GM10248 (cell line): ENCODE measurements at regions of chr1 and their contacts with region 1.

Region 1: DNA sequence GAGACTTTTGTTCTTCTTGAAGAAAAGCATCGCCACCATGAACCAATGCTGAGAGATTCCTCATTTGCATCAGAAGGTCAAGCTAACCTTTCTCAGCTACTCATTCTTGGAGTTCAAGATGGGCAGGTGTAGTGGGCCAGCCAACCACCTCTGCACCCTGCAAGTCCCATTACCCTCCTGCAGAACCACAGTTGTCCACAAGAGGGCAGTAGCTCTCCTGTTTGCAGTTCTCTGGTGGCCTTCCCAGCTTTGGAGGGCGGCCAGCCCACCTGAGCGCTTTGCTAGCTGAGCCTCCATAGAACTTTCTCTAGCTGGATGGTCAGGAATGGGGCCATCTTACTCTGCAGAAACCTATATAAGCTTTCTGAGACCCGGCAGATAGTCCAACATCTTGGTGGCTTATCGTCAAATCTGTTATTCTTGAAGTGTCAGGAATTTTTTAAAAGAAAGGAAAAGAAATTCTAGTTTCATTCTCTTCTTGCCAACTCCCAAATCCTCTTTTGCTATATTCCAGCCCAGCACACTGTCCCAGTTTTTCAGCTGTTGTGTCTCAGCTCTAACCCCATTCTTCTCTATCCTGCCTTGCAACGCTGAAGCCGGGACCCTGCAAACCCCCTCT is 11.0 kb upstream of the LMX1A start:
- DNase-seq: peak; percentile 78
- CTCF ChIP-seq: peak; percentile 94

Region 2: DNA sequence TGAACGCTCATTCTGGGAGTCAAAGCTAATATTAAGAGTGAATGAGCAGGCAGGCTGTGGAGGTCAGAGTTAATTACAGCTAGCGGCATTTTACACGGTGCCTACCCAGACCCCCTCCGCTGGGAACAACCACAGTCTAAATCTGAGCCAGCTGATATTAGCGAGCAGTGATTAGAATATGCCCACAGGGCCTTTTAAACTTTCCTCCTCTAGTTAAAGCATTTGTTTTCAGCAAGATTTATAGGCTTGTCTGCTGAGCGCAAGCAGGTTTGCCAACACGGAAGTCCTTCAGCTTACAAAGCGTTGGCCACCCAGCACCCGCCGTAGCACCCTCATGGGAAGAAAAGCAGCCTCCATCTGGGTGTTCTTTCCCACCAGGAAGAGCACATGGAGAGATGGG is 83.0 kb before region 1 on chr1:
- CTCF ChIA-PET with region 1: interaction called, 10 read pairs
- POLR2A ChIA-PET with region 1: no interaction called
- DNase-seq: no peak
- CTCF ChIP-seq: no peak

Region 3: GRCh38 chr1:165344198-165344597 is 23.3 kb before region 1 on chr1:
- CTCF ChIA-PET with region 1: interaction called, 43 read pairs
- POLR2A ChIA-PET with region 1: no interaction called
- DNase-seq: no peak
- CTCF ChIP-seq: no peak

Region 4: DNA sequence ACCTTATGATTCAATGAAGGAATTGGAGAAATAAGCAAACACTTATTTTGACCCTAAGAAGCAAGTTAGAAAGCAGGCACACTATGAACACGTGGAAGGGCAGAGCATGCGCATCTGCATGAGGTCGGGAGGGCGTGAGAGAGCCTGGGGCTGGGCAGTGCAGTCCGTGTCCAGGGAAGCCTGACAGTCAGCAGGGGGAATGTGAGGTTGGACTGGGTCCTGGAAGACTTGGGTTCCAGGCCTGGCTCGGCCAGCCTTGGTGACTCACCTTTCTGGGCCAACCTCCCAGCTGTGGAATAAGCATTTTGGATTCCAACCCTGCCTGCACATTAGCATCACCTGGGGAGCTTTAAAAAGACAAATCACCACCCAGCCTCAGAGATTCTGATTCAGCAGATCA is 15.6 kb after region 1 on chr1:
- CTCF ChIA-PET with region 1: interaction called, 80 read pairs
- POLR2A ChIA-PET with region 1: no interaction called
- DNase-seq: no peak
- CTCF ChIP-seq: no peak

Region 5: DNA sequence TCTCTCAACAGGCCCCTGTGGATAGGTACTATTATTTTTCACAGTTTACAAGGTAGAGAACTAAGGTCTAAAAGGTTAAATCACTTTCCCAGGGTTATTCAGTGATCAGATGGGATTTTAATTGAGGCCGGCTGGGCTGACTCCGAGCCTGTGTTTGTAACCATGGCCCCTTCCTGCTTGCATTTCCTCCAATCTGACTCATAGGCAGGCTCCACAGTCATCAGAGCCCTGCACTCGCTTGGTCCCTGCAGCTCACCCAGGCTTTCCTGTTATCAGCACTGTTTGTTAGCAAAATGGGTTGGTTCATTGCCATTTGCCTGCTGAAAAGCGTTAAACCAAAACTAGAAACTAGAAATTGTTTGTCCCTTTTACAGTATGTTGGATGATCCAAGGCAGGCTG is 30.5 kb after region 1 on chr1:
- CTCF ChIA-PET with region 1: interaction called, 70 read pairs
- POLR2A ChIA-PET with region 1: no interaction called
- DNase-seq: no peak
- CTCF ChIP-seq: no peak

Region 6: GRCh38 chr1:165586435-165586834 is 219.0 kb after region 1 on chr1:
- CTCF ChIA-PET with region 1: interaction called, 62 read pairs
- POLR2A ChIA-PET with region 1: no interaction called
- DNase-seq: no peak
- CTCF ChIP-seq: no peak